Activated CD4-positive, alpha-beta memory T cell treated with anti-CD3 and anti-CD28 coated beads for 36 hours (primary cell): ENCODE measurements at regions of chr1 and their contacts with region 1.

Region 1: DNA sequence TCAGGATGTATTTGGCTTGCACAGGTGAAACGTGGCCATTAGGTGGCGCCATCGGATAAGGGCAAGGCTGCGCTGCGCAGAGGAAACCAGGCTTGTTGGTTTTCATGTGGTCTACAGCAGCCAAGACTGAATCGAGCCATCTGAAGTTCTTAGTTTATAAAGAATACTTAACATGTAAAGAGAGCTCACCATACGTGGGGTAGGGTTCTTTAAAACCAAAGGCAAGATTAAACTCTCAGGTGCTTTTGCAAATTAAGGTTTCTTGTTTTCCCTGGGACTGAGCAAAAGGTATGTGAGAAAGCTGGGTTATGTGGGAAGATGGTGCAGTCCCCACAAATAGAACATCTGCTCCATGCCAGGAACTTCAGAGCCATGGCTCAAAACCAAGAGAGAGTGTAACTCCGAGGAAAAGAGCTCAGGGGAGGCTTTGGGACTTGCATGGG is 9.3 kb downstream of the MASP2 start:
- DNase-seq: peak; percentile 92
- H3K4me3 Mint-ChIP-seq: no peak overlapping the region
- H3K27ac Mint-ChIP-seq: no peak overlapping the region
- H3K4me1 Mint-ChIP-seq: peaks cover 4% of the 10 kb centered on the region
- H3K27me3 Mint-ChIP-seq: no peaks in the 10 kb centered on the region

Region 2: DNA sequence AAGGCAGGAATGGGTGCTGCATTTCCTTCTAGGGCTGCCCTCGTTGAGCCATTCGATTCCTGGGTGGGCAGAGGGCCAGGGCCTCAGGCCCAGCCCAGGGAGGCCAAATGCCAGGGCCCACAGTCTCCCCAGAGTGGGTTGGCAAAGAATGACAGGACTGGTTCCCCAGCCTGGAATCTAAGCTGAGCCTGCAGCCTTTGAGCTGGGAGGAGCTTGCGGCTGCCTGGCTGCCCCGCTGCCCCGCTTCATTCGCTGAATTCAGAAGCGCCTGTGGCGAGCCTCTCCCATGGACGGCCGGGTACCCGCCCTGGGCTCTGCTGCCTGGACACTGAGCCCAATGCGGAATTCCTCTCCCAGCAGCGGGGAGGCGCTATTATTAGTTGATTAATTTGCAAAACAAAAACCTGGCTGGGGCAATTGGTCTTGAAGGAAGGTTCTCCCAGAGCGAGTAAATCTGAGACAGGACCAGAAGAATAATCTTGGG is 57.6 kb before region 1 on chr1:
- CTCF ChIA-PET with region 1: no interaction called
- POLR2A ChIA-PET with region 1: no interaction called
- intact Hi-C with region 1: no loop called
- DNase-seq: no peak
- H3K4me3 Mint-ChIP-seq: no peak overlapping the region
- H3K27ac Mint-ChIP-seq: no peak overlapping the region
- H3K4me1 Mint-ChIP-seq: no peaks in the 10 kb centered on the region
- H3K27me3 Mint-ChIP-seq: peaks cover 27% of the 10 kb centered on the region

Region 3: GRCh38 chr1:11012250-11013171 is 25.2 kb before region 1 on chr1 and contains the start of gene TARDBP:
- CTCF ChIA-PET with region 1: interaction called, 18 read pairs
- POLR2A ChIA-PET with region 1: no interaction called
- intact Hi-C with region 1: no loop called
- DNase-seq: peak; percentile 92
- H3K4me3 Mint-ChIP-seq: peak within 1 kb of the TSS; percentile 87
- H3K27ac Mint-ChIP-seq: peak within 1 kb of the TSS; percentile 98
- H3K4me1 Mint-ChIP-seq: peaks cover 30% of the 10 kb centered on the region
- H3K27me3 Mint-ChIP-seq: no peaks in the 10 kb centered on the region
- total RNA-seq, gene TARDBP: 175 to 177 TPM

Region 4: DNA sequence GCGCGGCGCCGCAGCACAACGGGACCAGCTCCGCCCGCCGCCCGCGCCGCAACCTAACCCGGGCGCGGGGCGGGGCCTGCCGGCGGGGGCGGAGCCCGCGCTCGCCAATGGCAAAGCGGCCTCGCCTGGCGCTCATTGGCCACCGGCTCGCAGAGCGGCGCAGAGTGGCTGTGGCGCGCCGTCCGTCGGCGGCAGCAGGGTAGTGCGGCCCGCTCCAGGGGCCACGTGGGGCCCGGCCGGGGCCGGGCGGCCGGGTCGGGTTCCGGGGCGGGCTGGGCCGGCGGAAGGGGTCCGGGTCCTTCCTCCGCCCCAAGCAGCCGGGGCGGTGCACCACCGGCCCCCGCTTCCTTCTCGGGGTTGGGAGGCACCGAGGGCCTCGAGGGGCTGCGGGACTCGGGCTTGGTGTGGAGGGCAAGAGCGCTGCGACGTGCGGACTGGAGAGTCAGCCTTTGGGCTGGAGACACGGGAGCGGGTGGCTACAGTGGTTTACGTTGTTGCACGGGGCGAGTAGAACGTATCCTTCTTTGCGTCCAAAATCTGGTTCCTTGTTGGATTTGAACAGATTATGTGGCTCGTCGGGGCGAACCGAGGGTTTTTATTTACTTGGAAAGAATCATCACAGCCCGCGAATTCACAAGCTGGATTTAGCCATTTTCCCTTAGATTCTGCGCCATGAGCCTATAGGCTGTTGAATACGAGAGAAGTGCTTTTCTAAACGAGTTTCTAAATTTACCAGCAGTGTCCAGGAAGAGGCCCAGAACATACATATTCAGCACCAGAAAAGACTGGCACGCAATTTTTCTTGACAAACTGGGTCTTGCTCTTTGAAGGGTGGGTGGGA is 22.4 kb after region 1 on chr1 and contains the start of gene SRM:
- CTCF ChIA-PET with region 1: interaction called, 85 read pairs
- POLR2A ChIA-PET with region 1: interaction called, 8 read pairs
- intact Hi-C with region 1: loop called (anchors 2 kb)
- DNase-seq: peak; percentile 93
- H3K4me3 Mint-ChIP-seq: peak within 1 kb of the TSS; percentile 94
- H3K27ac Mint-ChIP-seq: peak within 1 kb of the TSS; percentile 93
- H3K4me1 Mint-ChIP-seq: peaks cover 46% of the 10 kb centered on the region
- H3K27me3 Mint-ChIP-seq: no peaks in the 10 kb centered on the region
- total RNA-seq, gene SRM: 159 to 164 TPM

Region 5: GRCh38 chr1:11099310-11100149 is 61.8 kb after region 1 on chr1 and contains the start of gene EXOSC10:
- CTCF ChIA-PET with region 1: interaction called, 66 read pairs
- POLR2A ChIA-PET with region 1: interaction called, 3 read pairs
- intact Hi-C with region 1: loop called (anchors 2 kb)
- DNase-seq: peak; percentile 96
- H3K4me3 Mint-ChIP-seq: peak within 1 kb of the TSS; percentile 96
- H3K27ac Mint-ChIP-seq: peak within 1 kb of the TSS; percentile 89
- H3K4me1 Mint-ChIP-seq: peaks cover 10% of the 10 kb centered on the region
- H3K27me3 Mint-ChIP-seq: no peaks in the 10 kb centered on the region
- total RNA-seq, gene EXOSC10: 62.1 to 70.0 TPM

Region 6: DNA sequence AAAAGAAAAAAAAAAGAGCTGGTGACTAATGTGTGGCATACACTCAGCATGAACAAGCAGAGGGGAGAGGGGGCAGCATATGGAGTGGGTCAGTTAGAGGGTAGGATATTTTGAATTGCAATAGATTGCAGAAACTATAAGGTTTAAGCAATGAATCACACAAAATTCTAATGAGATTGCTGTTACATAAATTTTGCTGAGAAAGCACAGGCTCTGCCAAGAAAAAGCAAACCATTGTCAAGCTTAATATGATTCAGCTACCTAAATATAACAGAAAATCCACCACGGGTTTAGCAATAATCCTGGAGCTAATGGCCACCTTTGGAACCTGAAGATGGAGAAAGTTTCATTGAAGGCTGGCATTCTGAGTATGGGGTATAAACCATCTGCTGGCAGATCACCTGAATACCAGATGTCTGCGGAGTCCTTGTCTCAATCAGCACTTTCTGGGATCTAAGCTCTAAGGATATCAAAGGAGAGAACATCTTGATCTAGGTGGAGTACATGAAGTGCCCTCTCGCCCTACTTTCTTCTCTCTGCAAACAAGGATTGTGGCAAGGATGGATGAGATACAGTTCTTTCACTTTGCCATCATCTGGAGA is 121.1 kb after region 1 on chr1:
- CTCF ChIA-PET with region 1: interaction called, 21 read pairs
- POLR2A ChIA-PET with region 1: no interaction called
- intact Hi-C with region 1: no loop called
- DNase-seq: no peak
- H3K4me3 Mint-ChIP-seq: no peak overlapping the region
- H3K27ac Mint-ChIP-seq: no peak overlapping the region
- H3K4me1 Mint-ChIP-seq: peaks cover 29% of the 10 kb centered on the region
- H3K27me3 Mint-ChIP-seq: no peaks in the 10 kb centered on the region

Region 7: GRCh38 chr1:11262171-11263049 is 224.6 kb after region 1 on chr1 and contains the start of gene MTOR:
- CTCF ChIA-PET with region 1: interaction called, 13 read pairs
- POLR2A ChIA-PET with region 1: interaction called, 6 read pairs
- intact Hi-C with region 1: no loop called
- DNase-seq: peak; percentile 99
- H3K4me3 Mint-ChIP-seq: peak within 1 kb of the TSS; percentile 81
- H3K27ac Mint-ChIP-seq: peak within 1 kb of the TSS; percentile 77
- H3K4me1 Mint-ChIP-seq: peaks cover 14% of the 10 kb centered on the region
- H3K27me3 Mint-ChIP-seq: no peaks in the 10 kb centered on the region
- total RNA-seq, gene MTOR: 35.8 to 39.4 TPM